ENCODE measurements at regions of chr1 and their contacts with region 1.

Region 1: GRCh38 chr1:78676347-78676982 is 26.8 kb downstream of the IFI44 start:
- DNase-seq: peak in 8 of 9 experiments; percentile 34 to 80 (median 59)
- ATAC-seq: peak; percentile 38
- H3K4me3 ChIP-seq: no peak overlapping the region
- H3K4me3 Mint-ChIP-seq: no peak overlapping the region
- H3K27ac ChIP-seq: no peak overlapping the region
- H3K27ac Mint-ChIP-seq: no peak overlapping the region
- H3K4me1 ChIP-seq: no peaks in the 10 kb centered on the region
- H3K4me1 Mint-ChIP-seq: peaks cover 5% of the 10 kb centered on the region
- H3K27me3 ChIP-seq: no peaks in the 10 kb centered on the region
- H3K27me3 Mint-ChIP-seq: peaks cover 3% of the 10 kb centered on the region
- CTCF ChIP-seq: peak; percentile 93

Region 2: GRCh38 chr1:78126506-78126905 is 550.0 kb before region 1 on chr1:
- CTCF ChIA-PET with region 1: interaction called, 3 read pairs
- POLR2A ChIA-PET with region 1: no interaction called
- intact Hi-C with region 1: loop called (anchors 1 kb)
- DNase-seq: no peak
- ATAC-seq: no peak
- H3K4me3 ChIP-seq: no peak overlapping the region
- H3K4me3 Mint-ChIP-seq: no peak overlapping the region
- H3K27ac ChIP-seq: no peak overlapping the region
- H3K27ac Mint-ChIP-seq: no peak overlapping the region
- H3K4me1 ChIP-seq: no peaks in the 10 kb centered on the region
- H3K4me1 Mint-ChIP-seq: no peaks in the 10 kb centered on the region
- H3K27me3 ChIP-seq: no peaks in the 10 kb centered on the region
- H3K27me3 Mint-ChIP-seq: no peaks in the 10 kb centered on the region
- CTCF ChIP-seq: no peak

Region 3: DNA sequence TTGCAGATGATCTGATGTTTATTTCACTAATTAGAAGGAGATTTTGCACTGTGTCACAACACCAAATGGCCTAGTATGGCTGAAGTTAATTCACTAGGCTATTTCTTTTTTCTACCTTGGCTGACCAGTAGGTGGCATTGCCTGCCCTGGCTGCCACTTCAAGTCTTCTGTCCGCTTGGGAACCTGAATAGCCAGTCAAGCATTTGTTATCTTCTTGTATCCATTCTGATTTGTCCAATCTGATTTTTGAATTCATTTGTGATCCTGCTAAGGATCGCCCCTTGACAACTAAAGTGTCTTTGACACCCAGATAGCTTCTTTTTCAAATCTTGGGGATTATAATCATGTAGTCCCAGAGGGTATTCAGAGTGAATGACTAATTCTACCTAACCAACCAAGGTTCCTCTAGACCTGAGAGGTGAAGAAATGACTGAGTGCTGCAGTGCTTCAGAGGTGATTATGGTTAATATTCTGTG is 531.3 kb before region 1 on chr1:
- CTCF ChIA-PET with region 1: interaction called, 7 read pairs
- POLR2A ChIA-PET with region 1: no interaction called
- intact Hi-C with region 1: loop called in 1 of 2 experiments (anchors 1 kb)
- DNase-seq: peak in 5 of 9 experiments; percentile 7 to 56 (median 34)
- ATAC-seq: peak; percentile 40
- H3K4me3 ChIP-seq: no peak overlapping the region
- H3K4me3 Mint-ChIP-seq: no peak overlapping the region
- H3K27ac ChIP-seq: no peak overlapping the region
- H3K27ac Mint-ChIP-seq: no peak overlapping the region
- H3K4me1 ChIP-seq: peaks cover 10% of the 10 kb centered on the region
- H3K4me1 Mint-ChIP-seq: peaks cover 19% of the 10 kb centered on the region
- H3K27me3 ChIP-seq: no peaks in the 10 kb centered on the region
- H3K27me3 Mint-ChIP-seq: peaks cover 16% of the 10 kb centered on the region
- CTCF ChIP-seq: peak; percentile 63

Region 4: GRCh38 chr1:78553859-78554258 is 122.6 kb before region 1 on chr1:
- CTCF ChIA-PET with region 1: no interaction called
- POLR2A ChIA-PET with region 1: no interaction called
- intact Hi-C with region 1: no loop called
- DNase-seq: no peak
- ATAC-seq: no peak
- H3K4me3 ChIP-seq: no peak overlapping the region
- H3K4me3 Mint-ChIP-seq: no peak overlapping the region
- H3K27ac ChIP-seq: no peak overlapping the region
- H3K27ac Mint-ChIP-seq: no peak overlapping the region
- H3K4me1 ChIP-seq: no peaks in the 10 kb centered on the region
- H3K4me1 Mint-ChIP-seq: no peaks in the 10 kb centered on the region
- H3K27me3 ChIP-seq: no peaks in the 10 kb centered on the region
- H3K27me3 Mint-ChIP-seq: peaks cover 13% of the 10 kb centered on the region
- CTCF ChIP-seq: no peak

Region 5: DNA sequence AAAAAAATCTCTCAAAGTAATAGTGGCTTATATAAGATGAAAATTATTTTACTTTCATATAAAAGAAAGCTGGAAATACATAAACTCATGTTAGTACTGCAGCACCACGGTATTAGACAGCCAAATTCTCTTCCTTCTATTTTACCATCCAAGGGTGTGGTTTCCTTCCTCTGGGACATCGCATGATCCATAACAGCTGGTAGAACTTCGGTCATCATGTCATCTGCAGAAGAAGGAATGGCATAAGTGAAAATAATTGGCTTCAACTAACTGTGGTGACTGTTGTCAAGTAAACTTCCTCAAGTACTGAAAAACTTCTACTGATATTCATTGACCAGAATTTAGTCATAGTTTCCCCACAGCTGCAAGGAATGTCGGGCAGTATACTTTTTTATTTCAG is 84.5 kb before region 1 on chr1:
- CTCF ChIA-PET with region 1: no interaction called
- POLR2A ChIA-PET with region 1: no interaction called
- intact Hi-C with region 1: no loop called
- DNase-seq: no peak
- ATAC-seq: no peak
- H3K4me3 ChIP-seq: no peak overlapping the region
- H3K4me3 Mint-ChIP-seq: no peak overlapping the region
- H3K27ac ChIP-seq: no peak overlapping the region
- H3K27ac Mint-ChIP-seq: no peak overlapping the region
- H3K4me1 ChIP-seq: no peaks in the 10 kb centered on the region
- H3K4me1 Mint-ChIP-seq: no peaks in the 10 kb centered on the region
- H3K27me3 ChIP-seq: no peaks in the 10 kb centered on the region
- H3K27me3 Mint-ChIP-seq: peaks cover 4% of the 10 kb centered on the region
- CTCF ChIP-seq: no peak

Region 6: DNA sequence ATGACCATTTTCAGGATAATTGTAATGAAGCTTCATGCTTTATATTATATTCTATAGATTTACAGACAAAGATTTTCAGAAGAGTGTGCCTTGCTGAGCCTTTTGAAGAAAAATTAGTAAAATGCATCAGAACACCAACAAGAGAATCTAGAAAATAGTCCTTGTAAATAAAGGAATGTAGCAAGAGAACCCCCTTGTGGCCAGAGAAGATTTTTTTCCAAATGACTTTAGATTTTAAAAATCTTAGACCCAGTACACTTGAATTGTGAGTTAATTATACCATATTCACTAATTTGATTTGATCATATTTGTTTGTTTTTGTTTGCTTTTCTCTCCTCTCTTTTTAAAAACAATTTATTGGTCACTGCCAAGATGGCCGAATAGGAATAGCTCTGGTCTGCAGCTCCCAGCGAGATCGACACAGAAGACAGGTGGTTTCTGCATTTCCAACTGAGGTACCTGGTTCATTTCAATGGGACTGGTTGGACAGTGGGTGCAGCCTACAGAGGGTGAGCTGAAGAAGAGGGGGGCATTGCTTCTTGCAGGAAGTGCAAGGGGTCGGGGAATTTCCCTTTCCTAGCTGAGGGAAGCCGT is 69.0 kb before region 1 on chr1:
- CTCF ChIA-PET with region 1: interaction called, 11 read pairs
- POLR2A ChIA-PET with region 1: no interaction called
- intact Hi-C with region 1: no loop called
- DNase-seq: no peak
- ATAC-seq: no peak
- H3K4me3 ChIP-seq: no peak overlapping the region
- H3K4me3 Mint-ChIP-seq: no peak overlapping the region
- H3K27ac ChIP-seq: no peak overlapping the region
- H3K27ac Mint-ChIP-seq: no peak overlapping the region
- H3K4me1 ChIP-seq: no peaks in the 10 kb centered on the region
- H3K4me1 Mint-ChIP-seq: no peaks in the 10 kb centered on the region
- H3K27me3 ChIP-seq: no peaks in the 10 kb centered on the region
- H3K27me3 Mint-ChIP-seq: no peaks in the 10 kb centered on the region
- CTCF ChIP-seq: peak; percentile 20

Region 7: GRCh38 chr1:78633209-78633608 is 43.3 kb before region 1 on chr1:
- CTCF ChIA-PET with region 1: no interaction called
- POLR2A ChIA-PET with region 1: no interaction called
- intact Hi-C with region 1: no loop called
- DNase-seq: no peak
- ATAC-seq: no peak
- H3K4me3 ChIP-seq: no peak overlapping the region
- H3K4me3 Mint-ChIP-seq: no peak overlapping the region
- H3K27ac ChIP-seq: no peak overlapping the region
- H3K27ac Mint-ChIP-seq: no peak overlapping the region
- H3K4me1 ChIP-seq: no peaks in the 10 kb centered on the region
- H3K4me1 Mint-ChIP-seq: peaks cover 5% of the 10 kb centered on the region
- H3K27me3 ChIP-seq: no peaks in the 10 kb centered on the region
- H3K27me3 Mint-ChIP-seq: no peaks in the 10 kb centered on the region
- CTCF ChIP-seq: no peak

Region 8: GRCh38 chr1:78649628-78650027 is 26.8 kb before region 1 on chr1 and contains the start of gene IFI44:
- CTCF ChIA-PET with region 1: interaction called, 6 read pairs
- POLR2A ChIA-PET with region 1: no interaction called
- intact Hi-C with region 1: loop called in 1 of 2 experiments (anchors 1 kb)
- DNase-seq: peak; percentile 50 to 90 (median 74)
- ATAC-seq: peak; percentile 81
- H3K4me3 ChIP-seq: peak within 1 kb of the TSS; percentile 49 to 52
- H3K4me3 Mint-ChIP-seq: peak within 1 kb of the TSS; percentile 83
- H3K27ac ChIP-seq: peak within 1 kb of the TSS; percentile 40 to 65
- H3K27ac Mint-ChIP-seq: peak within 1 kb of the TSS; percentile 88
- H3K4me1 ChIP-seq: peaks cover 50% of the 10 kb centered on the region
- H3K4me1 Mint-ChIP-seq: peaks cover 75% of the 10 kb centered on the region
- H3K27me3 ChIP-seq: no peaks in the 10 kb centered on the region
- H3K27me3 Mint-ChIP-seq: no peaks in the 10 kb centered on the region
- CTCF ChIP-seq: no peak
- total RNA-seq, gene IFI44: 24.2 to 30.5 TPM

Region 9: GRCh38 chr1:78716186-78716585 is 39.7 kb after region 1 on chr1:
- CTCF ChIA-PET with region 1: no interaction called
- POLR2A ChIA-PET with region 1: no interaction called
- intact Hi-C with region 1: no loop called
- DNase-seq: no peak
- ATAC-seq: no peak
- H3K4me3 ChIP-seq: no peak overlapping the region
- H3K4me3 Mint-ChIP-seq: no peak overlapping the region
- H3K27ac ChIP-seq: no peak overlapping the region
- H3K27ac Mint-ChIP-seq: no peak overlapping the region
- H3K4me1 ChIP-seq: no peaks in the 10 kb centered on the region
- H3K4me1 Mint-ChIP-seq: no peaks in the 10 kb centered on the region
- H3K27me3 ChIP-seq: no peaks in the 10 kb centered on the region
- H3K27me3 Mint-ChIP-seq: peaks cover 3% of the 10 kb centered on the region
- CTCF ChIP-seq: no peak